ENCODE measurements at regions of chr10 and their contacts with region 1.

Region 1: GRCh38 chr10:96878057-96878456 is 46.0 kb downstream of the LCOR start:
- DNase-seq: peak; percentile 20 to 66 (median 57)
- H3K4me3 ChIP-seq: no peak overlapping the region
- H3K27ac ChIP-seq: peak overlapping the region in 1 of 2 experiments; percentile 15
- H3K4me1 ChIP-seq: peaks cover 0 to 9% (median 2%) of the 10 kb centered on the region in 4 experiments
- H3K27me3 ChIP-seq: no peaks in the 10 kb centered on the region

Region 2: DNA sequence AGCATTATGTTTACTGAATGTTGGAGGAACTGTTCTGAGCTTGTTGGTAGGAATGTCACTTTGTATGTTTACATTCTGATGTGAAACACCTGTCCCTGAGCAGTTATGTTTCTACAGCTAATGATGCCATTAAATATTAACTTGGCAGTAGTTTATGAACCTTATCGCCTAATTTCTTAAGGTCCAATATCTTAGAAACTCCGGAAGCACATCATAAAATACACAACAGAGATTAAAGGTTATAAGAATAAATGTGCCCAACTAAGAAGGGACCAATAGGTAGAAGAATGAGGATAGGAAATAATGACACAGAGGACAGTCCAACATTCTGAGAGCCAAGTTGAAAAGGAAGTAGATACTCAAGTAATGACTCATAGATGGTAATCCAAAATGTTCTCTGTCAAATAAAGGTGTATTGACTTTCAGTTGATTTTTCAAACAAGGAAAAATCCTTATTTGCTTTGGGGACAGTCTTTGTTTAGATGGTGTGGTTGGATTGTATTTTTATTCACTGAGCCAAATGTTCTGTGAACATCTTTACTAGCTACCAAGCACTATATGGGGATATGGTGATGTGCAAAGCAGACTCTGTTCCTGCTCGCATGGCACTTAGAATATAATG is 14.0 kb before region 1 on chr10:
- CTCF ChIA-PET with region 1: interaction called, 11 read pairs
- POLR2A ChIA-PET with region 1: no interaction called
- DNase-seq: peak in 2 of 3 donors; percentile 42 to 60
- H3K4me3 ChIP-seq: no peak overlapping the region
- H3K27ac ChIP-seq: no peak overlapping the region
- H3K4me1 ChIP-seq: peaks cover 0 to 7% (median 3%) of the 10 kb centered on the region in 4 experiments
- H3K27me3 ChIP-seq: no peaks in the 10 kb centered on the region

Region 3: GRCh38 chr10:96896884-96897589 is 19.0 kb after region 1 on chr10:
- CTCF ChIA-PET with region 1: no interaction called
- POLR2A ChIA-PET with region 1: no interaction called
- DNase-seq: no peak
- H3K4me3 ChIP-seq: no peak overlapping the region
- H3K27ac ChIP-seq: no peak overlapping the region
- H3K4me1 ChIP-seq: no peaks in the 10 kb centered on the region
- H3K27me3 ChIP-seq: no peaks in the 10 kb centered on the region

Measured in common myeloid progenitor, CD34-positive (primary cell).